Caco-2 (cell line): ENCODE measurements at regions of chr11 and their contacts with region 1.

Region 1: DNA sequence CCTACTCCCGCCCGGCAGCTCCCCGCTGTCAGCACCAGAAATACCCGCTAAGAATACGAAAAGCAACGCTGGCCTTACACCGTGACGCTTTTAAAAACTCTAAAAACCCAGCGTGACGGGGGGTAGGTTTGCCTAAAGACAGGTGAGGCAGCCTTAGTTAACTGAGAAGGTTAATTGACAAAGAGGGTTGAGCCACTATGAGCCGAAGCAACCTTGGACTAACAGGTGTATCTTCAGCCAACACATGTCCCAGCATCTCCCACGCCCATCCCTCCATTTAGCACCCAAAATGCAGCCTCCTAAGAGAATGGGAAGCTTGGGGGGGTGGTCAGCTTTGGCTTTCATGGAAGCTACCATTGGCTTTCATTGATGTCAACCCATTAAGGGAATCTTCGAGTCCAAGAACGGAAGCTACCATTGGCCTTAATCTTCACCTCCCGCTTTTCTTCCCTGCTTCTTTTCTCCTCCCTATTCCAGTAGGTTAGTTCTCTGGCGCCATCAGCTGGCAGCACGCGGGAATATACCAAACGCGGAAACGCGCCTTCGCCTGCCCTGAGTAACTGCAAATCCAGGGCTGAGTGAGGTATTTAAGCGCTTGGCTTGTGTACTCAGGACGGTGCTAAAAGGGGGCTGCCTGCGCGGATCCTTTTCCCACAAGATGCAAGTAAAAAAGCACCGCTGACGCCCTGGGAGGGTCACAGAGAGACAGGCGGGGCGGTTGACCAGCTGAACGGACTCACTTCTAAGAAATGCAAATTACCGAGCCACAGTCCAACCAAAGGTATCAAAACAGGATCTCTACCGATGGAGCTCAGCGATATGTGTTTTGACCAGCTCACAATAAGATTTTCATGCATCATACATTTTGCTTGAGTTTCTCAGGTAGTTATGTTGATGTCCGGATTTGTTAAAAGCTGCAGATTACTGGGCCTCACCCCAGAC is 38.5 kb upstream of the GLYATL1 start:
- DNase-seq: peak; percentile 90
- H3K4me3 ChIP-seq: no peak overlapping the region
- H3K4me3 Mint-ChIP-seq: peak overlapping the region; percentile 41
- H3K27ac Mint-ChIP-seq: no peak overlapping the region
- H3K4me1 ChIP-seq: no peaks in the 10 kb centered on the region
- H3K4me1 Mint-ChIP-seq: no peaks in the 10 kb centered on the region
- H3K27me3 ChIP-seq: no peaks in the 10 kb centered on the region
- H3K27me3 Mint-ChIP-seq: no peaks in the 10 kb centered on the region
- CTCF ChIP-seq: peak; percentile 63 to 75

Region 2: GRCh38 chr11:58524232-58525036 is 376.3 kb before region 1 on chr11:
- CTCF ChIA-PET with region 1: no interaction called
- POLR2A ChIA-PET with region 1: no interaction called
- intact Hi-C with region 1: loop called (anchors 1 kb)
- DNase-seq: peak; percentile 60 to 71
- H3K4me3 ChIP-seq: no peak overlapping the region
- H3K4me3 Mint-ChIP-seq: no peak overlapping the region
- H3K27ac Mint-ChIP-seq: no peak overlapping the region
- H3K4me1 ChIP-seq: no peaks in the 10 kb centered on the region
- H3K4me1 Mint-ChIP-seq: no peaks in the 10 kb centered on the region
- H3K27me3 ChIP-seq: no peaks in the 10 kb centered on the region
- H3K27me3 Mint-ChIP-seq: peaks cover 9% of the 10 kb centered on the region
- CTCF ChIP-seq: peak; percentile 56 to 86

Region 3: DNA sequence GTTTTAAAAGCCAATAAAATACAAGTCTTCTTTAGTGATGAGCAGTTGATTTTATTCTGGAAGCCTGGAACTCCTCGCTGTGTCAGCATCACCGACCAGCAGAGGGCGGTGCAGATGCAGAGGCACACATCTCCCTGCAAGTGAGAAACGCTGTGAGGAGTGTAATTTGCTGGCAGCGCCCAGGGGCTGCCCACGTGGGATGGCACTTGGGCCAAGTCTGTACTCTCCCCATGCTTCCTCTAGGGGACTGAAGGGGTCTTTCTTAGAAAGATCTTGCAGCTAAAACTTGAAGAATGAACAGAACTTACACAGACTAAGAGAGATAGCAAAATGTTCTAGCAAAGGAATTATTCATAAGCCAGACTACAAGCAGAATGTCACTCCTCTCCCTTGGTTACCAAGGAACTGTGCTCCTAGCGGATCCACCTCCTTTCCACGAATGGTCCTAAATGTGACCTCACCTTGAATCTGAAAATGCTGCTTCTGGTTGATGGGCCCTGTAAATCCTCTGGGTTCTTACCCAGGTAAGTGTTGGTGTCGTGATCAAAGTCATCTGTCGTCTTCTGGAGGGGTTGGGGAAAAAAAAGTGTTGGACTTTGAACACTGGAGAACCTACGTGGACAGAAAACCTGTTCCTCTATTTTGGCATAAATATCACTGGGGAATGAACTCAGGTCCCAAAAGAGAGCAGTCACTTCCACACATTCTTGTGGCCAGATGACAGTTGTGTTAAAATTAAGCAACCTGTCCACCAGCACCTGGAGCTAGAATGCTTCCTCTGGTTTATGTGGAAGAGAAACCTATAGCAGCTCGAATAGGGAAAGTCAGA is 246.5 kb before region 1 on chr11:
- CTCF ChIA-PET with region 1: interaction called, 3 read pairs
- POLR2A ChIA-PET with region 1: no interaction called
- intact Hi-C with region 1: loop called (anchors 1 kb)
- DNase-seq: peak; percentile 75 to 82
- H3K4me3 ChIP-seq: no peak overlapping the region
- H3K4me3 Mint-ChIP-seq: no peak overlapping the region
- H3K27ac Mint-ChIP-seq: no peak overlapping the region
- H3K4me1 ChIP-seq: peaks cover 13% of the 10 kb centered on the region; the same call in 1 of the 2 replicates
- H3K4me1 Mint-ChIP-seq: peaks cover 23% of the 10 kb centered on the region
- H3K27me3 ChIP-seq: no peaks in the 10 kb centered on the region
- H3K27me3 Mint-ChIP-seq: no peaks in the 10 kb centered on the region
- CTCF ChIP-seq: peak; percentile 88 to 97

Region 4: DNA sequence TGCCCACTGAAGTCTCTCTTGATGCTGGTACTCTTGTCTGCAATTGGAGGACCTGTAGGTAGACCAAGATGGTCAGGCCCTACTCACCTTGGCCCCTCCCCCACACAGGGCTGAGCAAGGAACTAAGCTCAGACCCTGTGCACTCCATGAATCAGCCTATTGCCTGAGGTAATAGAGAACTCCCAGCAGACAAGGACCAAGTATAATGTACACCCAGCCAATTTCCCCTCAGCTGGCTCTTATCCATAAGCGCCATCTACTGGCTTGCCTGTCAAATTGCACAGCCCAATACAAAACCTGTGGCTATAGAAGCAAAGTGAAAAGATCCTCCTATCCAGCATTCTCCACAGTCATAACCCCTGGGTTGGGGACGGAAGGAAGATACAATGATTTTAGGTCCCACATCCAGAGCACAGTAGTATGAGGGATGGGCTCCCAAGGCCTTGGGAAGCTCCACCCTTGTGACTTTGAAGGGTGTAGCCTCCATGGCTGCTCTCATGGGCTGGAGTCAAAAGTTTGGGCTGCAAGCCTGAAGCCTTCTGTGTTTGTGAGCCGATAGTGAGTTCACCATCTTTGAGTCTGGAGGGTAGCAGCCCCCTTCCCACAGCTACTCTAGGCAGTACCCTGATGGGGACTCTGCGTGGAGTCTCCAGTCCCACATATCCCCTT is 112.3 kb before region 1 on chr11:
- CTCF ChIA-PET with region 1: interaction called, 3 read pairs
- POLR2A ChIA-PET with region 1: no interaction called
- intact Hi-C with region 1: loop called (anchors 1 kb)
- DNase-seq: peak; percentile 69 to 76
- H3K4me3 ChIP-seq: no peak overlapping the region
- H3K4me3 Mint-ChIP-seq: no peak overlapping the region
- H3K27ac Mint-ChIP-seq: no peak overlapping the region
- H3K4me1 ChIP-seq: peaks cover 40% of the 10 kb centered on the region
- H3K4me1 Mint-ChIP-seq: peaks cover 24% of the 10 kb centered on the region
- H3K27me3 ChIP-seq: no peaks in the 10 kb centered on the region
- H3K27me3 Mint-ChIP-seq: no peaks in the 10 kb centered on the region
- CTCF ChIP-seq: peak; percentile 77 to 89

Region 5: DNA sequence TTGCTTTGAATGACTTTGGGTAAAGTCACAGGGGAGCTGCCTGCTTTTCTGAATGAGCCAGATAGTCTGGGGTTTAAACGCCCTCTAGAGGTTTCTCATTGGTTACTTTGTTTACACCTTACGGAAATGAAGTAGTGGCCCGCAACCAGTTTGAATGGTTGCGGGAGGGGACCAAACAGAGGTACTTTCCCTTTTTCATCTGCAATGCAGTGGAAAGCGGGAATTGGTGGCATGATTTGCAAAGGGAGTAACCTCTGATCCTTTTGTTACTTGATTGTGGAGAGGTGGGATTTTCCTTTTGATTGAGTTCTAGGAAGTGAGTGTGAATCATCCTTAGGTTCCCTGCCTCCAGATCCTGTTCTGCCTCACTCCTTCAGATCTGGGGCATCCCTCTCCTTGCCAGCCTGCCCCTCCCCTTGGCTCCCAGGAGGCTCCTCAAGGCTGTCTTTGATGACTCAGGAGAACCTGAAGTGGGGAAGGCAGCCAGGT is 22.6 kb after region 1 on chr11:
- CTCF ChIA-PET with region 1: interaction called, 5 read pairs
- POLR2A ChIA-PET with region 1: no interaction called
- intact Hi-C with region 1: loop called (anchors 2 kb)
- DNase-seq: no peak
- H3K4me3 ChIP-seq: no peak overlapping the region
- H3K4me3 Mint-ChIP-seq: no peak overlapping the region
- H3K27ac Mint-ChIP-seq: peak overlapping the region; percentile 25
- H3K4me1 ChIP-seq: peaks cover 69% of the 10 kb centered on the region
- H3K4me1 Mint-ChIP-seq: peaks cover 48% of the 10 kb centered on the region
- H3K27me3 ChIP-seq: no peaks in the 10 kb centered on the region
- H3K27me3 Mint-ChIP-seq: no peaks in the 10 kb centered on the region
- CTCF ChIP-seq: peak in 1 of 2 experiments; percentile 23

Region 6: GRCh38 chr11:58958500-58958899 is 57.8 kb after region 1 on chr11:
- CTCF ChIA-PET with region 1: no interaction called
- POLR2A ChIA-PET with region 1: no interaction called
- intact Hi-C with region 1: no loop called
- DNase-seq: peak in 1 of 2 experiments; percentile 48
- H3K4me3 ChIP-seq: no peak overlapping the region
- H3K4me3 Mint-ChIP-seq: no peak overlapping the region
- H3K27ac Mint-ChIP-seq: no peak overlapping the region
- H3K4me1 ChIP-seq: no peaks in the 10 kb centered on the region
- H3K4me1 Mint-ChIP-seq: no peaks in the 10 kb centered on the region
- H3K27me3 ChIP-seq: no peaks in the 10 kb centered on the region
- H3K27me3 Mint-ChIP-seq: peaks cover 3% of the 10 kb centered on the region
- CTCF ChIP-seq: peak; percentile 17 to 36